ENCODE measurements at regions of chr5 and their contacts with region 1.

Region 1: DNA sequence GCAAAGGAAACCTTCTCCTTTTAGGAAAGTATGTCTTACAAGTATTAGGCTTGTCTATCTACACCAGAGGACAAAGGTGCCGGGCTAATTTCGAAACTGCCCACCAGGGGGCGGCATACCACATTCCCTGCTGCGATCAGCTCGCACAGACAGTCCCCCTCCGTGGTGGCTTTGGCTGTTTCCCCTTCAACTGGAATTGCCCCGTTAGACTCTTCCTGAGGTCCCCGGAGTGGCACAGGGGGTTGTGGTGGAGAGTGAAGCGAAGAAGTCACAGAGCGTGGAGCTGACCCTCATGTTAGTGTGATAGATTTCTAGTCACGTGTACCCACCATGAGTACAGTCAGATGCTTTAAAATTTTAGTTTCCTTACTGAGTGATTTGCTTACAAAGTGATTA is 17.5 kb downstream of the PTTG1 start:
- DNase-seq: no peak
- H3K4me3 ChIP-seq: peak overlapping the region; percentile 51
- CTCF ChIP-seq: peak; percentile 85

Region 2: DNA sequence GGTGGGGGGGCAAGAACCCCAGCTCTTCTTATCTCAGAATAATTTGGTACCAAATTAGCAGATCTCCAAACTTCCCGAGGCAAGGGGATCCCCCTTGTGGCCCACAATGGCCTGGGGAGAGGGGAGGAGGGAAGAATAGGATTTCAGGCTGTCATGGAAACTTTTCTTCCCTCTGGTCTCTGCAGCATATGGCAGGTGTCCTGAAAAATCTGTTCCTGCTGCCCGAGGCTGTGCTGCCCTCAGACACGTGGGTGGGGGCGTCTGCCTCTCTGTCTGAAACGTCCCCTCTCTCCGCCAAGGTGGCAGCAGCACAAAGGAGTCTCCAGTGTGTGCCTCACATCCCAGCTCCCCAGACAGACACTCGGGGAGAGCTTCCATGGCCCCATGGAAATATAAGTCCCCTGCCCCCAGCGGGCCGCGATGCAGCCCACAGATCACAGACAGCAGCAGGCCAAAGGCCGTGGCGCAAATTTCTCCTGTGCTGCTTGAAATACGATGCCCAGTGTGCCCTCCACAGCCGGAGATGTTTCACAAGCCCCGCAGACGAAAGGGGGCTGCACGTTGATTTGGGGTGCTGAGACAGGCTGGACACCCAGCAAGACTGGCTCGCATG is 160.8 kb before region 1 on chr5:
- CTCF ChIA-PET with region 1: no interaction called
- POLR2A ChIA-PET with region 1: no interaction called
- DNase-seq: no peak
- H3K4me3 ChIP-seq: no peak overlapping the region
- CTCF ChIP-seq: no peak

Region 3: GRCh38 chr5:160357861-160358411 is 81.3 kb before region 1 on chr5:
- CTCF ChIA-PET with region 1: no interaction called
- POLR2A ChIA-PET with region 1: no interaction called
- DNase-seq: no peak
- H3K4me3 ChIP-seq: no peak overlapping the region
- CTCF ChIP-seq: no peak

Region 4: DNA sequence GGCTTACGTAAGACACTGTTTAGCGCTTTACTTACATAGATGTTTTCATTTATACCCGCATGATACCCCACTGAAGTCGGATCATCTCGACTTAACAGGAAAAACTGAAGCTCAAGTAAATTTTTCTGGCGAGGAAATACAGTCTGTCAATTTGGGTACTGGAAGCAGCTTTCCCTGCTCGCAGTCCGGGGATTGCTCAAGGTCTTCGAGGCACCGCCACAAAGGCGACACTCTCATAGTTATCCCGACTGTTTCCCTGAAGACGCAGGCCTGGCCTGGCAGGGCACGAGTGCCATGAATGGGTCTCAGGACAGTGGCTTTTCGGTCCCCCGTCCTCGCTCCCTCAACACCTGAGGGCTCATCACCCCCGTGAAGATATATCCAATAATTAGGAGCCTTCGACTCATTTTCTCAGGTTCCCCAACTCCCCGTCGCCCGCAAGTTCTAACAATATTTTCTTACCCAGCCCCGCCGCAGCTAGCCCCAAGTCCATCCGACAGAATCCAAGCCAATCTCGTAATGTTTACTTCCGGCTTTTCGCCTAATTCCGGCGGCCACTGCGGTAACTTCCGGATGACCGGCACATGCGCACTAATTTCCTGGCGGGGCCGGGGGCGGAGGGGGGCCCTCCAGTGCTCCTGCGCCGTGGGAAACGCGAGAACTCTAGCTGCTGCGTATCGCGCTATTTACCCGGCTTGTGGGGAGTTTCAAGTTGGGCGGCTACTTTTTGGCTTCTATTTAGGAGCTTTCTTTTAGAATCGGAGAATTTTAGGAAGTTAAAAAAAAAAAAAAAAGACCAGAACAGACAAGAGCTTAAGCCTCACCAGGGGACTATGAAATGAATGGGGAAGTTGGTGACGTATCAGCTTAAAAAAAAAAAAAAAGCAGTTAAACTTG is 20.4 kb before region 1 on chr5 and contains the start of gene SLU7:
- CTCF ChIA-PET with region 1: interaction called, 186 read pairs
- POLR2A ChIA-PET with region 1: no interaction called
- DNase-seq: peak; percentile 79
- H3K4me3 ChIP-seq: peak within 1 kb of the TSS; percentile 97
- CTCF ChIP-seq: no peak

Region 5: DNA sequence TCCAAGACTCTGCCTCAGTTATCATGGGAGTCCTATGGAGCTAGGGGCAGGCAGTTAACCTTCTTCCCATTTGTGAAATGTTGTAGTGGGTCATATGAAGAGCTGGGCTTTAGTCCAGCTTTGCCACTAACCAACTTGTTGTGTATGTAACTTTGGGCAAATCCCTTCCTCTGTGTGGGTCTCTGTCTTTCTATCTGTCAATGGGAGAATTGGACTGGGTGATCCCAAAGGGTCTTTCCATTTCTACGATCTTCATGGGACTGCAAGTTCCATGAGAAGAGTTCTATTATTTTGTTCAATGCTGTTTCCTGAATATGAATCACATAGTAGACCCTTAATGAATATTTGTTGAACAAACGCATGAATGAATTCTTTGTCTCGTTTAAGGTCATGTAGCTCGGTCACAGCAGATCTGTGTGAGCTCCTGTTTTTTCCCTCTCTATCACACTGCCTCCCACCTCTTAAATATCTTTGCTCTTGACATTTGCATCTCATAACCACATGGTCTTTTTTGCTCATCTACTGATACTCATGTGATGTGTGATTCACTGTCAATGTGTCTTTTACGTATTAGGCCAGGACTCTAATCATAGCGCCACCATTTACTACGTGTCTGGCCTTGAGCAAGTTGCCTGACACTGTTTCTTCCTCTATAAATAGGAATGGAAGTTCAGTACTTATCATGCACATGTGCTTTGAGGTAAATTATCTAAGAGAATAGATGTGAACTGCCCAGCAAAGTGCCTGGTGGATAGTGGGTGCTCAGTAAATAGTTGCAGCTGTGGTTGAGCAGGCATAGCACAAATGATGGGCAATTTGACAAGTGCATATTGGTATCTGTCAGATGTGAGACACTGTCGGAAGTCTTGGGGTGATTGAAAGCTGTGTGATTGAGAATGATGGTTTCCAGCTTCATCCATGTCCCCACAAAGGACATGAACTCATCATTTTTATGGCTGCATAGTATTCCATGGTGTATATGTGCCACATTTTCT is 19.9 kb after region 1 on chr5:
- CTCF ChIA-PET with region 1: interaction called, 55 read pairs
- POLR2A ChIA-PET with region 1: no interaction called
- DNase-seq: no peak
- H3K4me3 ChIP-seq: no peak overlapping the region
- CTCF ChIP-seq: no peak

Region 6: DNA sequence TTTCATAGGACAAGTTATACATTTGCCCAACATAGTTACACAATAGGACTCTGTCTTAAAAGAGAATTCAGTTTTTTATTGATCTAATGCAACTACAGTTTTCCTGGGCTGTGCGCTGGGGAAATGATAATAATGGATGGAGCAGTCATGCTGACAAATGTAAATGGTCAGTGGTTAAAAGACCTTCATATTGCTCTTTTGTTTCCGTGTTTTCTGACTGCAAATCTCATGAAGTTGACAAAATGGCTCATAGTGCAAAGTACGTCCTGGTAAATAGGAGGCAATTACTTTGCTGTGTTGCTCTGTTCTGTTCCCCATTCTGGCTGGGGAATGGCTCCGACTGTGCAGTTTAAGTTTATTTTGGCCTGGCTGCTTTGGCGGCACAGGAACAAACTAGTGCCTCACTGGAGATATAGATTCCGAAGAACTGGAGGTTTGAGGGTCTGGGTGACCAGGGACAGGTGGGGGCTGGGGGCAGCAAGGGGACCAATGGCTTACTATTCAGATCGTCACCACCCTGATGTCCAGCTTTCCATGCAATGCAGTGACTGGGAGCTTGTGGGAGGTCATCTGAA is 36.7 kb after region 1 on chr5:
- CTCF ChIA-PET with region 1: interaction called, 19 read pairs
- POLR2A ChIA-PET with region 1: no interaction called
- DNase-seq: no peak
- H3K4me3 ChIP-seq: no peak overlapping the region
- CTCF ChIP-seq: no peak

Region 7: DNA sequence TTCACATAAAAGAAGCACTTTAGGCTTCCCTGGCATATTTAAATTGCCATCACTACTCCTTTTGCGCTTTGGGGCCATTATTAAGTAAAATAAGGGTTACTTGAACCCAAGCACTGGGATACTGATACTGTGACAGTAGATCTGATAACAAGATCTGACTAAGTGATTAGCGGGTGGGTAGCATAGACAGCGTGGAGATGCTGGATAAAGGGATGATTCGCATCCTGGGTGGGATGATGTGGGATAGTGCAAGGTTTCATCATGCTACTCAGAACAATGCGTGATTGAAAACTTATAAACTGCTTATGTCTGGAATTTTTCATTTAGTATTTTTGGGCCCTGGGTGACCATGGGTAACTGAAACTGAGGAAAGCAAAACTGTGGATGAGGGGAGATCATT is 57.6 kb after region 1 on chr5:
- CTCF ChIA-PET with region 1: interaction called, 11 read pairs
- POLR2A ChIA-PET with region 1: no interaction called
- DNase-seq: no peak
- H3K4me3 ChIP-seq: no peak overlapping the region
- CTCF ChIP-seq: no peak

Measured in AG04449 (cell line).